Natural killer cell (primary cell): ENCODE measurements at regions of chr20 and their contacts with region 1.

Region 1: GRCh38 chr20:36439040-36439730 is 102.1 kb upstream of the MYL9 start:
- DNase-seq: peak; percentile 51 to 74
- ATAC-seq: peak in 2 of 3 donors; percentile 42 to 50
- H3K4me3 ChIP-seq: no peak overlapping the region
- H3K4me3 Mint-ChIP-seq: no peak overlapping the region
- H3K27ac ChIP-seq: no peak overlapping the region
- H3K27ac Mint-ChIP-seq: no peak overlapping the region
- H3K4me1 ChIP-seq: peaks cover 13% of the 10 kb centered on the region
- H3K4me1 Mint-ChIP-seq: peaks cover 6 to 12% of the 10 kb centered on the region in 2 donors
- H3K27me3 ChIP-seq: peaks cover 2% of the 10 kb centered on the region
- H3K27me3 Mint-ChIP-seq: peaks cover 0 to 3% of the 10 kb centered on the region in 2 donors
- CTCF ChIP-seq: peak; percentile 73

Region 2: DNA sequence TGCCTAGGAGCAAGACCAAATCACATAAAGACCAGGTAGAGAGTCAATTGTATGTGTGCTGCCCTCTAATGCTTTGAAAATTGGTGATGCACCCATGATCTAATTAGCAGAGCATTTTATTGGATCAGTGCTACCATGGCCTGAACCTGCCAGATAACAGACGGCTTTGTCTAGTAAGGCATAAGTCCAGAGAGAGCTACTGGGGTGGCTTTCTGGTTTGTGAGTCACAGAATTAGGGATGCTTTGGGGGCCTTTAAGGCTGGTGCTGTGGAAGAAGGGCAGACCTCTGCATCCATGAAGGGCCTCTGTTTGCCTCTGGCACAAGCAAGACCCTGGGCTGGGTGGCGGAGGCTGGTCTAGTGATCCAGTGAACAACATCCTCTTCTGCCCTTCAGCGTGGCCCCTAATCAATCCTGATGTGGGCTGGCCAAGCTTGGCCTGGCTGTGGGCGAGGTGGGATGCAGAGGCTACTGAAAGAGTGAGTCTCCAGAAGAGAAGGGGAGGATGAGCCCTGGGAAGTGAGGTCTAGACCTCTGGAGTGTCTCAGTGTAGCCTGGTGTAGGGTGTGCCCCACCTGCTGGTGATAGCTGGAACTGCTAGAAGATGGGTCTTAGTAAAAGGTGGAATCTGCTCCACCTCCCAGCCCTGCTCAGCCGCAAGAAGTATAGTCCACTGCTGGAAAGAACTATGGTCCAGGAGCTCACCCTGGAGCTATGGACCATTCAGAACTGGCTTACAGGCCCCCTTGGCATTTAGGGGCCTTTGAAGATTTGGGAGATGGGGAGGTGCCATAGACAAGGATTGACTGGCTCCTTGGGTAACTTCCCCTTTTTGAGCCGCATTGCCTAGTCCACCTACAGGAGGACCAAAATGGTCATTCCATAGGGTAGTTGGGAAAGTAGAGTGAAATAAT is 239.6 kb before region 1 on chr20:
- intact Hi-C with region 1: loop called (anchors 2 kb)
- DNase-seq: peak; percentile 65 to 83
- ATAC-seq: peak; percentile 71 to 80 (median 76)
- H3K4me3 ChIP-seq: no peak overlapping the region
- H3K4me3 Mint-ChIP-seq: no peak overlapping the region
- H3K27ac ChIP-seq: no peak overlapping the region
- H3K27ac Mint-ChIP-seq: no peak overlapping the region
- H3K4me1 ChIP-seq: peaks cover 6% of the 10 kb centered on the region
- H3K4me1 Mint-ChIP-seq: peaks cover 5 to 11% of the 10 kb centered on the region in 2 donors
- H3K27me3 ChIP-seq: no peaks in the 10 kb centered on the region
- H3K27me3 Mint-ChIP-seq: peaks cover 14 to 25% of the 10 kb centered on the region in 2 donors
- CTCF ChIP-seq: peak; percentile 92